ENCODE measurements at regions of chr3 and their contacts with region 1.

Region 1: GRCh38 chr3:159978353-159978752 is 10.3 kb upstream of the IL12A start:
- DNase-seq: no peak
- H3K4me3 ChIP-seq: no peak overlapping the region
- H3K27ac ChIP-seq: peak overlapping the region; percentile 20 to 68 (median 49)
- H3K4me1 ChIP-seq: peaks cover 0 to 24% (median 11%) of the 10 kb centered on the region in 4 donors
- H3K27me3 ChIP-seq: no peaks in the 10 kb centered on the region
- CTCF ChIP-seq: no peak
- EP300 ChIP-seq: peak in 2 of 4 donors; percentile 19 to 71
- POLR2A ChIP-seq: no peak

Region 2: GRCh38 chr3:159938712-159939111 is 39.6 kb before region 1 on chr3:
- intact Hi-C with region 1: loop called (anchors 5 kb)
- DNase-seq: no peak
- H3K4me3 ChIP-seq: no peak overlapping the region
- H3K27ac ChIP-seq: no peak overlapping the region
- H3K4me1 ChIP-seq: peaks cover 0 to 18% (median 5%) of the 10 kb centered on the region in 4 donors
- H3K27me3 ChIP-seq: no peaks in the 10 kb centered on the region
- CTCF ChIP-seq: no peak
- EP300 ChIP-seq: no peak
- POLR2A ChIP-seq: peak in 1 of 2 donors; percentile 8

Measured in sigmoid colon (tissue), 7 donors.